HepG2 (cell line): ENCODE measurements at regions of chr20 and their contacts with region 1.

Region 1: DNA sequence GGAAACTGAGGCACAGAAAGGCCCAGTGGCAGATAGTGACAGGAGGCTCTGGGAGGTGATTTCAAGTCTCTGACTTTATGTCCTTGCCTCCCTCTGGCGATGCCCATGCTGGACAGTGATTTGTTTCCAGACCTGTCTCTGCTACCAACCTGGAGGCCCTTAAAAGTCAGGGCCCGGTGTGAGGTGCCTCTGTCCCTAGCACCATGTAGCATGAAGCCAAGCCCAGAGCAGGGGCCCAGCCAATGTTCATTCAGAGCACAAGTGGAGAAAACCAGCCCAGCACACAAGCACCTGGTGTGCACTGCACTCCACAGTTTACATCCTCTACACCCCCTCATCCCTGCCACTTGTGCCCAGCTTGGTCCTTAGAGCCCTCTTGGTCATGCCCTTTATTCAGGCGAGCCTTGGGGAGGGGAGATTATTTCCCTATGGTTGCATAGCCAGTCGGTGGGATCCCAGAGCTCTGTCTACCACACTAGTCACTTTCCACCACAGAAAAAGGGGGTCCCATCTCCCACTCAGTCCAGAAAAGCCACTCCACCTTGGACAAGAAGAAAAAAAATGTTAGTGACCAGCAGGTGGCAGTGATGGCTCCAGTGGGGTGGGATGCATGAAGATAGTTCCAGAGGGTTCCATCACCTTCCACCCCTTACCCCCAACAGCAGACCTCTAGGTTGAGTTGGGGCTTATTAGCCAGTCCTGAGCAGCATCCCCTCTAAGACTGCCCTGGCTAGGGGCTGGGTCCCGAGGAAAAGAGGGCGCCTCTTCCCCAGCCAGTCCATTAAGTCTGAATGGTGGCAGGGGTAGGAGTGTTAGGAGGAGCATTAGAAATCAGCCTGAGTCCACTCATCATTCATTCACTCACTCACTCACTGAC is 30.9 kb downstream of the KIAA1755 start:
- DNase-seq: peak; percentile 54
- ATAC-seq: peak; percentile 49
- H3K4me3 ChIP-seq: no peak overlapping the region
- H3K27ac ChIP-seq: no peak overlapping the region
- H3K4me1 ChIP-seq: peaks cover 12% of the 10 kb centered on the region; the same call in 1 of the 2 replicates
- H3K27me3 ChIP-seq: peaks cover 0 to 26% of the 10 kb centered on the region in 2 experiments; a peak in 3 of 5 replicates
- CTCF ChIP-seq: peak; percentile 76
- EP300 ChIP-seq: no peak
- POLR2A ChIP-seq: no peak
- RAD21 ChIP-seq: 0 out of 2 replicates have a peak, but pooled peaks have one; percentile 19

Region 2: GRCh38 chr20:38196592-38196991 is 33.0 kb before region 1 on chr20:
- CTCF ChIA-PET with region 1: no interaction called
- POLR2A ChIA-PET with region 1: no interaction called
- in situ Hi-C with region 1: no loop called
- intact Hi-C with region 1: no loop called
- DNase-seq: no peak
- ATAC-seq: no peak
- H3K4me3 ChIP-seq: no peak overlapping the region
- H3K27ac ChIP-seq: no peak overlapping the region
- H3K4me1 ChIP-seq: peaks cover 11% of the 10 kb centered on the region
- H3K27me3 ChIP-seq: peaks cover 3 to 8% of the 10 kb centered on the region in 2 experiments; a peak in 3 of 5 replicates
- CTCF ChIP-seq: no peak
- EP300 ChIP-seq: no peak
- POLR2A ChIP-seq: no peak
- RAD21 ChIP-seq: no peak

Region 3: DNA sequence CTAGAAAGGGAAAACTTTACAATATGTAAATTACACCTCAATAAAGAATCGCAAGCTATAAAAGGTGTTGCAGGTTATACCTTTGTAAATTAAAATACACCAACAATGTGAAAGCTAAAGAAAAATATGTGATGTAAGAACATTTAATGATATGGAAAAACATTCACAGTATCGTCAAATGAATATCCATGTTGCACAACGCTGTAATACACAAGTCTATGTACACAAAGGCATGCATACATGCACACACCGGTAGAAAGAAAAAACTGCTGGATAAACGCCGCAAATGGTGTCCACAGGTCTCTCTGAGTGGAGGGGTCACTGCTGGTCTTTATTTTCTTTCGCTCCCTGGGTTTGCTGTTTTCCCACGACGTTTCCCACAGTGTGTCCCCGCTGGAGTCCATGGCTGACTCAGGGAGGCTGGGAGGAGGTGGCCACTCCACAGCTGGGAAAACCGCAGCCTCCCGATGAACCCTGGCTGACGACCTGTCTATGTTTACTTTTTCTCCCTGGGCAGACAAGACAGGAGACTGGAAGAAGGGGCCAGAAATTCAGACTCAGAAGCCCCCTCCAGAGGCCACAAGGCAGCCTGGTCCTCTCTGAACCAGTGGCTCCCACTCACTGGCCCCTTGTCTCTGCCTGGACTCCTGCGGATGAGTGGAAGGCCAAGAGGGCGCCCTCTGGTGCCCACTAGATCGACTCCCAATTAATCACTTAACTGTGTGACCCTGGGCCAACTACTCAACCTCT is 61.4 kb after region 1 on chr20:
- CTCF ChIA-PET with region 1: interaction called, 7 read pairs
- POLR2A ChIA-PET with region 1: no interaction called
- in situ Hi-C with region 1: no loop called
- intact Hi-C with region 1: loop called (anchors 1 kb)
- DNase-seq: peak; percentile 87
- ATAC-seq: peak; percentile 88
- H3K4me3 ChIP-seq: peak overlapping the region in 1 of 3 experiments; percentile 32; a peak in 1 of 6 replicates
- H3K27ac ChIP-seq: no peak overlapping the region
- H3K4me1 ChIP-seq: peaks cover 21% of the 10 kb centered on the region
- H3K27me3 ChIP-seq: peaks cover 0 to 31% of the 10 kb centered on the region in 2 experiments; a peak in 4 of 5 replicates
- CTCF ChIP-seq: peak; percentile 89
- EP300 ChIP-seq: peak in 1 of 2 experiments; percentile 40; a peak in 1 of 4 replicates
- POLR2A ChIP-seq: no peak
- RAD21 ChIP-seq: peak; percentile 70

Region 4: GRCh38 chr20:38321959-38322598 is 92.5 kb after region 1 on chr20:
- CTCF ChIA-PET with region 1: interaction called, 19 read pairs
- POLR2A ChIA-PET with region 1: no interaction called
- in situ Hi-C with region 1: loop called (anchors 5 kb)
- intact Hi-C with region 1: loop called (anchors 1 kb)
- DNase-seq: peak; percentile 57
- ATAC-seq: peak; percentile 80
- H3K4me3 ChIP-seq: no peak overlapping the region
- H3K27ac ChIP-seq: no peak overlapping the region
- H3K4me1 ChIP-seq: no peaks in the 10 kb centered on the region
- H3K27me3 ChIP-seq: peaks cover 1 to 5% of the 10 kb centered on the region in 2 experiments; a peak in 2 of 5 replicates
- CTCF ChIP-seq: peak; percentile 78
- EP300 ChIP-seq: no peak
- POLR2A ChIP-seq: no peak
- RAD21 ChIP-seq: peak; percentile 63; the same call in 1 of the 2 replicates

Region 5: DNA sequence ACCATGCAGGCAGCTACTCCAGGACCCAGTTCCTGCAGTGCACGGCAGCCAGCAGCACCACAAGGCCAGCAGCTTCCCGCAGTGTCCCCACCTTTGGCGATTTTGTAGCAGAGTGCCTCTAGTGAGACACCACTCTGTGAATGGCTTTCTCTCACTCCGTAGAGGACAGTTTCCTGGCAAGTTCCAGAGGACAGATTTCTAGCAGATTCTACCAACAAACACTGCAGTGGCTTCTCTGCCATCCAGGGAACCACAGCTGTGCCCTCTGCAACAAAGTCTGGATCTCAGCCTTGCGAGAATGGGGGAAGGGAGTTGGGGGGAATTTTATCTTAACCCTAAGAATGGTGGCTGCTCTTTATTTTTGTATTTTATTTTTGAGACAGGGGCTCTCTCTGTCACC is 176.9 kb after region 1 on chr20:
- CTCF ChIA-PET with region 1: interaction called, 16 read pairs
- POLR2A ChIA-PET with region 1: no interaction called
- in situ Hi-C with region 1: loop called (anchors 5 kb)
- intact Hi-C with region 1: loop called (anchors 1 kb)
- DNase-seq: no peak
- ATAC-seq: peak; percentile 10; the same call in 1 of the 3 replicates
- H3K4me3 ChIP-seq: no peak overlapping the region
- H3K27ac ChIP-seq: no peak overlapping the region
- H3K4me1 ChIP-seq: peaks cover 14% of the 10 kb centered on the region
- H3K27me3 ChIP-seq: no peaks in the 10 kb centered on the region
- CTCF ChIP-seq: no peak
- EP300 ChIP-seq: no peak
- POLR2A ChIP-seq: no peak
- RAD21 ChIP-seq: no peak

Region 6: DNA sequence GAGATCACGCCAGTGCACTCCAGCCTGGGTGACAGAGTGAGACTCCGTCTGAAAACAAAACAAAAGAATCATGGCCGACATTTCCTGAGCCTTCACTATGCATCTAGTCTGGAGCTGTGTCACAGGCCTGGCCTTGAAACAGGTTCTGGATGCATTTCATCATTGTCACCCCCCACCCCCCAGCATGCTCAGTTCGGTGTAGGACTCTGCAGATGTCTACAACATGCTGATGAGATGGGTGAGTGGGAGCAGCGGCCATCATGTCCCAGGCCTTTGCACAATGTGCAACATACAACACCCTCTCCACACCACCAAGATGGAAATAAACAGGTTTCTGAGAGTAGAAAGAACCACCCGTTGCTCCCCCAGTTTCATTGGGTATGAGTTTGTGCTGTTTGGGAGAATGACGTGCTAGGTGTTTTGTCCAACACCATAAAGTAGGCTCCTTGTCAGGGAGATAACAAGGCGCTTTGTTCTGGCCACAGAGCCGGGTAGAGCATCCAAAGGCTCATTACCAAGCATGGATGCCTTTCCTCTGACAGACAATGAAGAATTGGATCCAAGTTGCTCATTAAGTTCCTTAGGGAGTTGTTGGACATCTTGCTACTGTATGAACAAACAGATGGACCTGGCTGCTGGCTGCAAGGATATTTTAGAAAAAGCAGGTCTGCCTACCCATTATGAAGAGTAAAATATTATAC is 183.4 kb after region 1 on chr20:
- CTCF ChIA-PET with region 1: interaction called, 16 read pairs
- POLR2A ChIA-PET with region 1: no interaction called
- in situ Hi-C with region 1: loop called (anchors 5 kb)
- intact Hi-C with region 1: loop called (anchors 1 kb)
- DNase-seq: no peak
- ATAC-seq: no peak
- H3K4me3 ChIP-seq: no peak overlapping the region
- H3K27ac ChIP-seq: no peak overlapping the region
- H3K4me1 ChIP-seq: peaks cover 8% of the 10 kb centered on the region
- H3K27me3 ChIP-seq: no peaks in the 10 kb centered on the region
- CTCF ChIP-seq: no peak
- EP300 ChIP-seq: no peak
- POLR2A ChIP-seq: no peak
- RAD21 ChIP-seq: no peak

Region 7: DNA sequence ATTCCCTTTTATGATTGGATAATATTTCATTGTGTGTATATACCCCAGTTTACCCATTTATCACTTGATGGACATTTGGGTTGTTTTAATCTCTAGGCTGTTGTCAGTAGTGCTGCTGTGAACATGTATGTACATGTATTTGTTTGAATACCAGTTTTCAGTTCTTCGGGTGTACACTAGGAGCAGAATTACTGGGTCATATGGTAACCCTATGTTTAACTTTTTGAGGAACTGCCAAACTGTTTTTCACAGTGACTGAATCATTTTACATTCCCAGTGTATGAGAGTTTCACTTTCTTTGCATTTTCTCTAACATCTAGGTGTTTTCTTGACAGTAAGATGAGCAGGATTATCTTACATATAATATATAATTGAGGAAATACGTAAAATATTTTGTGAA is 306.7 kb after region 1 on chr20:
- CTCF ChIA-PET with region 1: no interaction called
- POLR2A ChIA-PET with region 1: no interaction called
- in situ Hi-C with region 1: no loop called
- intact Hi-C with region 1: no loop called
- DNase-seq: no peak
- ATAC-seq: no peak
- H3K4me3 ChIP-seq: no peak overlapping the region
- H3K27ac ChIP-seq: no peak overlapping the region
- H3K4me1 ChIP-seq: no peaks in the 10 kb centered on the region
- H3K27me3 ChIP-seq: no peaks in the 10 kb centered on the region
- CTCF ChIP-seq: no peak
- EP300 ChIP-seq: no peak
- POLR2A ChIP-seq: no peak
- RAD21 ChIP-seq: no peak